ENCODE measurements at regions of chr6 and their contacts with region 1.

Region 1: GRCh38 chr6:89763550-89763949 is 56.0 kb downstream of the MDN1 start:
- DNase-seq: no peak
- ATAC-seq: no peak
- H3K4me3 ChIP-seq: no peak overlapping the region
- H3K4me3 Mint-ChIP-seq: no peak overlapping the region
- H3K27ac ChIP-seq: no peak overlapping the region
- H3K27ac Mint-ChIP-seq: no peak overlapping the region
- H3K4me1 ChIP-seq: no peaks in the 10 kb centered on the region
- H3K4me1 Mint-ChIP-seq: no peaks in the 10 kb centered on the region
- H3K27me3 ChIP-seq: no peaks in the 10 kb centered on the region
- H3K27me3 Mint-ChIP-seq: no peaks in the 10 kb centered on the region
- CTCF ChIP-seq: no peak

Region 2: DNA sequence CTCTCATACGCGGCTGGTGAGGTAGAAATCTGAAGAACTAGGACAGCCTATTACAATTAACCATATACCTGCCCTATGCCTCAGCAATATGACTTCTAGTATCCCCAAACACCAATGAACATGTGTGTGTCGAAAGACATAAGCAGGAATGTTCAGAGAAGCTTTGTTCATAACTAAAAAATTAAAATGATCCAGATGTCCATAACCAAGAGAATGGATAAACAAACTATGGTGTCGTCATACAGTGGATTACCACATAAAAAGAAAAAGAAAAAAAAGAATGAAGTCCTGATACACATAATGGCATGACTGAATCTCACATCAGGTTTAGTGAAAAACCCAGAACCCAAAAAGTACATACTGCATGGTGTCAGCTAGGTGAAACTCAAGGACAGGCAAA is 17.8 kb before region 1 on chr6:
- CTCF ChIA-PET with region 1: no interaction called
- POLR2A ChIA-PET with region 1: interaction called, 3 read pairs
- intact Hi-C with region 1: loop called in 1 of 2 experiments (anchors 1 kb)
- DNase-seq: no peak
- ATAC-seq: no peak
- H3K4me3 ChIP-seq: no peak overlapping the region
- H3K4me3 Mint-ChIP-seq: no peak overlapping the region
- H3K27ac ChIP-seq: no peak overlapping the region
- H3K27ac Mint-ChIP-seq: no peak overlapping the region
- H3K4me1 ChIP-seq: no peaks in the 10 kb centered on the region
- H3K4me1 Mint-ChIP-seq: no peaks in the 10 kb centered on the region
- H3K27me3 ChIP-seq: no peaks in the 10 kb centered on the region
- H3K27me3 Mint-ChIP-seq: no peaks in the 10 kb centered on the region
- CTCF ChIP-seq: no peak